ENCODE measurements at regions of chr1 and their contacts with region 1.

Region 1: GRCh38 chr1:111709986-111710385 is 29.2 kb downstream of the INKA2 start:
- DNase-seq: no peak

Region 2: DNA sequence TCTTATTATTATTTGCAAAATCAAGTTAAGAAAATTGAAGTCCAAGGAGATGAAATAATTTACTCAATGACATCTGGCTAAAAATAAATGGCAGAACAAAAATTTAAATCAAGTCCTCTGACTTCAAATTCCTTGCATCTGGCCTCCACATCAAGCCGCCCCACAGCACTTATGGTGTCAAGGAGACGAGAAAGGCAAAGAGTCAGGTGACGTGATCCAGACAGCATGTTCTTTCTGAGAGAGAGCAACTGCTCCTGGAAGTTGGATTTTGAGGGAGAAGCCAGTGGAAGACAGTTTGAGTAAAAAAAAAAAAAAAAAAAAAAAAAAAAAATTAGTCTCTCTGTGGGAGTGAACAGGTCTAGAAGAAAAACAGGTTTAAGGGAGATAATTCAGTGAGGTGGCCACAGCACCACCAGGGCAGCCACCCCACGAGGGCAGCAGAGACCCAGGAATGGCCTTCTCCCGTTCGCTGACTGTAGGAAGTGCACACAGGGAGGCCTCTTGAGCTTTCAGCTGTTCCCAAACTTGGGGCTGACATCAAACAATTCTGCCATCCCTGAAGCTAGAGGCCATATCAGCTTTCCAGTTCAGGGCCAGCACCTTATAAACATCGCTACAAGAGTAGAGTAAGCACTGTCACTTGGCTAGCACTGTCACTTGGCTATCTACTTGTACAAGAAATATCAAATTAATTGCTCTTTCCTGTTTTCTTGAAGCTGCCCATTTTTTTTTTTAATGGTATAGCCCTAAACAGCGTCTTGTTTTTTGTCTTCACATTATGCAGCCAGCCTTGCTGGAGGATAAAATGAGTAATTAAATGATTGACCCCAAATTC is 228.4 kb before region 1 on chr1:
- intact Hi-C with region 1: loop called (anchors 5 kb)
- DNase-seq: peak; percentile 93

Region 3: GRCh38 chr1:111660204-111661150 is 49.5 kb before region 1 on chr1:
- intact Hi-C with region 1: no loop called
- DNase-seq: no peak

Region 4: GRCh38 chr1:112237980-112238545 is 528.1 kb after region 1 on chr1:
- intact Hi-C with region 1: no loop called
- DNase-seq: no peak